H1 (cell line): ENCODE measurements at regions of chr22 and their contacts with region 1.

Region 1: GRCh38 chr22:25048659-25049647 is 96.4 kb downstream of the KIAA1671 start:
- DNase-seq: peak in 1 of 2 experiments; percentile 84
- H3K4me3 ChIP-seq: no peak overlapping the region
- H3K27ac ChIP-seq: no peak overlapping the region
- H3K4me1 ChIP-seq: no peaks in the 10 kb centered on the region
- H3K27me3 ChIP-seq: no peaks in the 10 kb centered on the region
- CTCF ChIP-seq: peak; percentile 90 to 98 (median 91)
- EP300 ChIP-seq: no peak
- POLR2A ChIP-seq: no peak
- RAD21 ChIP-seq: peak; percentile 93 to 94

Region 2: DNA sequence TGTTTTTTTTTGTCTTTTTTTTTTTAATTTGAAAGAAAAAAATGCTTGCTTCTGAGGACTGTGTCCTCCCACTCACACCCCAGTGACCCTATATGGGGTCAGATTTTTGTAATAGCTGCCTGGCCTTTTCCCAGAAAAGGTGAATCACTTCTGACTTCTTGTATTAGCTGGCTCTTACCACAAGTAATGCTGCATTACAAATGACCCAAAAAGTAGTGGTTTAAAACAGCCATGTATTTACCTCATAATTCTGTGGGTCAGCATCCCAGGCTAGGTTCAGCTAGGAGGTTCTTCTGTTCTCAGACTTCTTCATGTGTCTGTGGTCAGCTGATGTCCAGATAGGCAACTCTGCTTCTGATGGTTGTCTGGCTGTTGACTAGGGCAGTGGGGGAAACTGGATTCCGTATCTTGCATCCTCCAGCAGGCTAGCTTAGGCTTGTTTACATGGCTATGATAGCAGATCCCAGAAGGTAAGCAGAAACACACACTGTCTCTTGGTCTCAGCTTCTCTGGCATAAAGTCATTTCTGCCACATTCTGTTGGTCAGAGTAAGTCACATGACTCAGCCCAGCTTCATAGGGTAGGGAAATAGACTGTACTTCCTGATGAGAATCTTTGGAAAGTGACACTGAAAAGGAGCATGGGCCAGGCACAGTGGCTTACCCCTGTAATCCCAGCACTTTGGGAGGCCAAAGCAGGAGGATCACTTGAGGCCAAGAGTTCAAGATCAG is 121.9 kb before region 1 on chr22:
- CTCF ChIA-PET with region 1: interaction called, 26 read pairs
- POLR2A ChIA-PET with region 1: no interaction called
- DNase-seq: no peak
- H3K4me3 ChIP-seq: no peak overlapping the region
- H3K27ac ChIP-seq: no peak overlapping the region
- H3K4me1 ChIP-seq: peaks cover 0 to 8% (median 5%) of the 10 kb centered on the region in 4 experiments; a peak in 4 of 7 replicates
- H3K27me3 ChIP-seq: no peaks in the 10 kb centered on the region
- CTCF ChIP-seq: no peak
- EP300 ChIP-seq: no peak
- POLR2A ChIP-seq: no peak
- RAD21 ChIP-seq: no peak

Region 3: DNA sequence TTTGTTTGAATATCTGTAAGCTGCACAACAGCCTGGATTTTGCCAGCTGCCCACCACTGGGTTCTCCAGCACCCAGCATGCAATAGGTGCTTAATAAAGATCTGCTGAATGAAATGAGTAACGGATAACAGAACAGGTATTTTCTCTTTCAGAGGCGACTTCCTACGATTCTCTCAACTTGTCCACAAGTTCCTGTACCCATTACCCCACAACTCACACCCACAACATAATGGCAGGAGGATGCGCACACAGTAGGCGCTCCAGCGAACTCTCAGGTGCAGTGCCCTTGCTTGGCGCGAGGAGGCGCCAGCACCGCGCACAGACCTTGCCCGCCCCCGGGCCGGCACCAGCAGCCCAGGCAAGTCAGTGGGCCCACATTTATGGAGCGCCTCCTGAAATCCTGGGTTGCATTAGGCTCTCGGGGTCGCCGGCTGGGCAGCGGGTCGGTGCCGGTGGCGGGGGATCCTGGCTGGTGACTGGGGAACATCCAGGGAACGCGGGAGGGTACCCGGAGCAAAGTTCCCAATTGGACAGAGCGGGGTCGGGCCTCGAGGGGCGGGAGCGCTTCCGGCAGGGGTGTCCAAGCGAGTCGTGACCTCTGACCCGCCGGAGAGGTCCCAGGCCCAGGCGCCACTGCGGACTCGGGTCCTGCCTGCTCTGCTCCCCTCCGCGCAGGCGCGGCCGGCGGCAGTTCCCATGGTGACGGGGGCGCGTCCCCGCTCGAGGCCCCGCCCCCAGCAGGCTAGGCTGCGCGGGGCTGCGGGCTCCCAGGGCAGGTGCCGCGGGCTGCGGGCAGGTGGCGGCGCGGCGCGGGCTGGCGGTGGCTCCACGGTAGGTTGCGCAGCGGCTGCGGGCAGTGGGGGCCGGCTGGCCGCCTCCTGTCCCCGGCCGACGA is 96.8 kb before region 1 on chr22 and contains the start of gene KIAA1671:
- CTCF ChIA-PET with region 1: interaction called, 221 read pairs
- POLR2A ChIA-PET with region 1: interaction called, 4 read pairs
- DNase-seq: peak; percentile 84 to 98
- H3K4me3 ChIP-seq: peak within 1 kb of the TSS; percentile 70 to 83 (median 77)
- H3K27ac ChIP-seq: peak within 1 kb of the TSS; percentile 89
- H3K4me1 ChIP-seq: peaks cover 5 to 22% (median 8%) of the 10 kb centered on the region in 4 experiments
- H3K27me3 ChIP-seq: peaks cover 0 to 3% (median 1%) of the 10 kb centered on the region in 4 experiments; a peak in 2 of 7 replicates
- CTCF ChIP-seq: peak; percentile 95 to 99 (median 95)
- EP300 ChIP-seq: 0 out of 3 replicates have a peak, but pooled peaks of 1 of the 2 experiments have one; percentile 15
- POLR2A ChIP-seq: no peak
- RAD21 ChIP-seq: peak; percentile 92 to 94
- total RNA-seq, gene KIAA1671: 22.6 and 23.9 TPM in 2 replicates

Region 4: DNA sequence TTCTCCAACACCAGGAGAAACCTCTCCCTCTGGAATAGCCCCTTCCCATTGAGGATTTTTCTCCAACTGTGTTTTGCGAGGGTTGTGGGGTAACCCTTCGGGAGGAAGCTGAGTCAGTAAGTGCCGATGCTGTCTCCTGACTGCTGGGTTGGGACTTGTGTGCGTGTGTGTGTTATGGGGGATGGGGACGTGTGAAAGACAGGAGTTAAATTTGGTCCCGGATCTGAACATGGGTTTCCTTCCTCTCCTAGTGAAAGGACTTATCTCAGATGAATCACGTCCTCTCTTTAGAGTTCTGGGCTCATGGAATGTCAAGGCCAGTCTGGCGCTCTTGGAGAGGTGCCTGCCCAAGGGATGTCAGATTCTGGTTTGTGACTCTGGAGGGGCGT is 63.1 kb before region 1 on chr22:
- CTCF ChIA-PET with region 1: interaction called, 10 read pairs
- POLR2A ChIA-PET with region 1: interaction called, 3 read pairs
- DNase-seq: no peak
- H3K4me3 ChIP-seq: no peak overlapping the region
- H3K27ac ChIP-seq: no peak overlapping the region
- H3K4me1 ChIP-seq: peaks cover 0 to 4% (median 1%) of the 10 kb centered on the region in 4 experiments; a peak in 4 of 7 replicates
- H3K27me3 ChIP-seq: no peaks in the 10 kb centered on the region
- CTCF ChIP-seq: no peak
- EP300 ChIP-seq: no peak
- POLR2A ChIP-seq: no peak
- RAD21 ChIP-seq: no peak

Region 5: DNA sequence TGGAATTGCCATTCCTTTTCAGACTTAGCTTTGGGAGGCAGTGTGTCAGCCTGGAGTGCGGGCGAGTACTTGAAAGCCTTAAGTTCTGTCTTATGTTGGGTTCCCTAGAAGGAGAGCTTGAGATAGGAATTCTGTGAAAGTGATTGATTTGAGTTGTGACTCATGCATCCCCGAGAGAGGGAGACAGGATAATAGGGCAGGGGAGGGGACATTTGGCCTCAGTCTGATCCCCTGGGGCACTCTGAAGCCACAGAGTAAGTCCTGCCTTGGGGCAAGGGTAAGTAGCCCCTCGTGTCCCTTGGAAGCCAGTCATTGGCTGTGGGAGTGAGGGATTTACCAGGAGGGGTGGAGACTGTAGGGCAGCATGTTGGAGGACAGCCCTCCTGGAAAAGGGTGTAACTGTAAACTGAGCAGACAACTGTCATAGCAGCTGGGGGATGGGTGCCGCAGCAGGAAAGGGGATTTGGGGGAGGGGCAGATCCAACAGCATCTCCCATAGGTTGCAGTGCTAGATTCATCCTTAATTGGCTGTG is 52.5 kb before region 1 on chr22:
- CTCF ChIA-PET with region 1: interaction called, 10 read pairs
- POLR2A ChIA-PET with region 1: interaction called, 3 read pairs
- DNase-seq: peak; percentile 73 to 75
- H3K4me3 ChIP-seq: peak overlapping the region in 2 of 4 experiments; percentile 14 to 31; a peak in 2 of 8 replicates
- H3K27ac ChIP-seq: peak overlapping the region; percentile 20
- H3K4me1 ChIP-seq: peaks cover 14 to 23% (median 18%) of the 10 kb centered on the region in 4 experiments
- H3K27me3 ChIP-seq: no peaks in the 10 kb centered on the region
- CTCF ChIP-seq: no peak
- EP300 ChIP-seq: no peak
- POLR2A ChIP-seq: peak in 1 of 2 experiments; percentile 43; a peak in 1 of 3 replicates
- RAD21 ChIP-seq: no peak

Region 6: DNA sequence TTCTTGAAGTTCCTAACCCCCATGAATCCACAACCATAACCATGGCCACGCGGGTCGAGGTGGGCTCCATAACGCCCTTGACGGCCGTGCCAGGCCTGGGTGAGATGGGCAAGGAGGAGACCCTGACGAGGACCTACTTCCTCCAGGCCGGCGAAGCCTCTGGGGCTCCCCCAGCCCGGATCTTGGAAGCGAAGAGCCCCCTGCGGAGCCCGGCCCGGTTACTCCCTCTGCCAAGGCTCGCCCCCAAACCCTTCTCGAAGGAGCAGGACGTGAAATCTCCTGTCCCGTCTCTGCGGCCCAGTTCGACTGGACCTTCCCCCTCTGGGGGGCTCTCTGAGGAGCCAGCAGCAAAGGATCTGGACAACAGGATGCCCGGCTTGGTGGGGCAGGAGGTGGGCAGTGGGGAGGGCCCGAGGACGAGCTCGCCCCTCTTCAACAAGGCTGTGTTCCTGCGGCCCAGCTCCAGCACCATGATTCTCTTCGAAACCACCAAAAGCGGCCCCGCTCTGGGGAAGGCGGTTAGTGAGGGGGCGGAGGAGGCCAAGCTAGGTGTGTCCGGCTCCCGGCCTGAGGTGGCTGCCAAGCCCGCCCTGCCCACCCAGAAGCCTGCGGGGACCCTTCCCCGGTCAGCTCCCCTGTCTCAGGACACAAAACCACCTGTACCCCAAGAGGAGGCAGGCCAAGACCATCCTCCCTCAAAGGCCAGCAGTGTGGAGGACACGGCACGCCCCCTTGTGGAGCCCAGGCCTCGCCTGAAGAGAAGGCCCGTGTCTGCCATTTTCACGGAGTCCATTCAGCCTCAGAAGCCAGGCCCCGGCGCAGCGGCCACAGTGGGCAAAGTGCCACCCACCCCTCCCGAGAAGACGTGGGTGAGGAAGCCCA is 20.8 kb before region 1 on chr22:
- CTCF ChIA-PET with region 1: interaction called, 43 read pairs
- POLR2A ChIA-PET with region 1: interaction called, 3 read pairs
- DNase-seq: peak in 1 of 2 experiments; percentile 88
- H3K4me3 ChIP-seq: no peak overlapping the region
- H3K27ac ChIP-seq: no peak overlapping the region
- H3K4me1 ChIP-seq: no peaks in the 10 kb centered on the region; a peak in 1 of 7 replicates
- H3K27me3 ChIP-seq: no peaks in the 10 kb centered on the region
- CTCF ChIP-seq: peak; percentile 85 to 91 (median 85)
- EP300 ChIP-seq: no peak
- POLR2A ChIP-seq: no peak
- RAD21 ChIP-seq: peak; percentile 85 to 91